ENCODE measurements at regions of chr11 and their contacts with region 1.

Region 1: GRCh38 chr11:95599959-95600586 is 189.5 kb downstream of the FAM76B start:
- DNase-seq: peak; percentile 66
- H3K4me3 Mint-ChIP-seq: no peak overlapping the region
- H3K27ac Mint-ChIP-seq: peak overlapping the region; percentile 35
- H3K4me1 Mint-ChIP-seq: peaks cover 19% of the 10 kb centered on the region
- H3K27me3 Mint-ChIP-seq: no peaks in the 10 kb centered on the region

Region 2: DNA sequence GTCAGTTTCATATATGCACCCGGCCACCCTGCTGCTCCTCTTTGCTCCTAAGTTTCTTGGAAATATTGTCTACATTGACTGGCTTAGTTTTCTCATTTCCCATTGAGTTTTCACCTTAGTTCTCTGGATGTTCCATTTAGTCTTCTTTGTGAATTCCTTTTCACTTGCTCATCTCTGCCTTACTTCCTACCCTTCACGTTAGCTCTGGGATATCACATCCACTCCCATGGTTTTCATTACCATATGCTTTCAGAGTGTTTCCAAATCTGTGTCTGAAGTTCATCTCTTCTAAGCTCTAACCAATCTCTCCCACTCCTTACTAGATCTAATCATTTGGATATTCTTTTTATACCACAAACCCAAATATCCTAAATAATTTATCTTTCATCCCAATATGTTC is 36.9 kb before region 1 on chr11:
- intact Hi-C with region 1: no loop called
- DNase-seq: no peak
- H3K4me3 Mint-ChIP-seq: no peak overlapping the region
- H3K27ac Mint-ChIP-seq: peak overlapping the region; percentile 13
- H3K4me1 Mint-ChIP-seq: peaks cover 47% of the 10 kb centered on the region
- H3K27me3 Mint-ChIP-seq: no peaks in the 10 kb centered on the region

Region 3: GRCh38 chr11:95584589-95584988 is 15.5 kb before region 1 on chr11:
- intact Hi-C with region 1: loop called (anchors 2 kb)
- DNase-seq: peak; percentile 32
- H3K4me3 Mint-ChIP-seq: no peak overlapping the region
- H3K27ac Mint-ChIP-seq: no peak overlapping the region
- H3K4me1 Mint-ChIP-seq: peaks cover 20% of the 10 kb centered on the region
- H3K27me3 Mint-ChIP-seq: no peaks in the 10 kb centered on the region